Activated CD4-positive, alpha-beta T cell treated with anti-CD3 and anti-CD28 coated beads, Interleukin-2, amount 10 ng/mL, durations not matched to agents 24 days and 14 days (primary cell): ENCODE measurements at regions of chr22 and their contacts with region 1.

Region 1: DNA sequence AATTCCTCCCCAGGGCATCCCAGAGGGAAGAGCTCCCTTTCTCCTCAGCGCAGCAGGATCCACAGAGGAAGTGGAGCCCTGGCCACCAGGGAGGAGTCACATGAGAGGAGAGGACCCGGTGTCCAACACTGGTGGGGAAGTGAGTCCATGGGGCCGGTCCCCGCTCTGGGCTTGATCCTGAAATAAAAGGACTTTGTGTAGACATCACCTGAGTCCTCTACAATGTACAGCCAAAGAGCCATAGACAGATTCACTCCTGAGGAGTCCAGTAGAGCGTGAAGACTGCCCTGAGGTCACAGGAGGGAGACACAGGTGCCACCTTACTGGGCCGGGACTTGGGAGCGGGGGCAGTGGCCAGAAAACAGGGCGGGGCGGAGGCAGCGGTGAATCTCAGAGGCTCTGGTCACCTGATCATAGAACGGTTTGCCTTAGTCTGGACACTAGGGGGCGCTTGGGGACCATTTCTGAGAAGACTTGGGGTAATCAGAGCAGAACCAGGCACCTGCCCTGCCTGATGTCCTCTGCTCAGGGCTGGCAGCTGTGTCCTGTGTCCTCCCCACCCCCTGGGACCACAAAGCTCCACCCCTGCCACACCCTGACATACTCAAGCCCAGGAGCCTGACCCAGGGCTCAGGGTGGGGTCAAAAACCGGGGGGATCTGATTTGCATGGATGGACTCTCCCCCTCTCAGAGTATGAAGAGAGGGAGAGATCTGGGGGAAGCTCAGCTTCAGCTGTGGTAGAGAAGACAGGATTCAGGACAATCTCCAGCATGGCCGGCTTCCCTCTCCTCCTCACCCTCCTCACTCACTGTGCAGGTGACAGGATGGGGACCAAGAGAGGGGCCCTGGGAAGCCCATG is 112.7 kb downstream of the VPREB1 start:
- DNase-seq: peak; percentile 94
- H3K4me3 Mint-ChIP-seq: no peak overlapping the region
- H3K27ac Mint-ChIP-seq: no peak overlapping the region
- H3K4me1 Mint-ChIP-seq: peaks cover 7% of the 10 kb centered on the region
- H3K27me3 Mint-ChIP-seq: peaks cover 25% of the 10 kb centered on the region

Region 2: GRCh38 chr22:22375576-22376423 is 18.5 kb after region 1 on chr22:
- intact Hi-C with region 1: loop called (anchors 1 kb)
- DNase-seq: no peak
- H3K4me3 Mint-ChIP-seq: no peak overlapping the region
- H3K27ac Mint-ChIP-seq: no peak overlapping the region
- H3K4me1 Mint-ChIP-seq: no peaks in the 10 kb centered on the region
- H3K27me3 Mint-ChIP-seq: peaks cover 42% of the 10 kb centered on the region

Region 3: DNA sequence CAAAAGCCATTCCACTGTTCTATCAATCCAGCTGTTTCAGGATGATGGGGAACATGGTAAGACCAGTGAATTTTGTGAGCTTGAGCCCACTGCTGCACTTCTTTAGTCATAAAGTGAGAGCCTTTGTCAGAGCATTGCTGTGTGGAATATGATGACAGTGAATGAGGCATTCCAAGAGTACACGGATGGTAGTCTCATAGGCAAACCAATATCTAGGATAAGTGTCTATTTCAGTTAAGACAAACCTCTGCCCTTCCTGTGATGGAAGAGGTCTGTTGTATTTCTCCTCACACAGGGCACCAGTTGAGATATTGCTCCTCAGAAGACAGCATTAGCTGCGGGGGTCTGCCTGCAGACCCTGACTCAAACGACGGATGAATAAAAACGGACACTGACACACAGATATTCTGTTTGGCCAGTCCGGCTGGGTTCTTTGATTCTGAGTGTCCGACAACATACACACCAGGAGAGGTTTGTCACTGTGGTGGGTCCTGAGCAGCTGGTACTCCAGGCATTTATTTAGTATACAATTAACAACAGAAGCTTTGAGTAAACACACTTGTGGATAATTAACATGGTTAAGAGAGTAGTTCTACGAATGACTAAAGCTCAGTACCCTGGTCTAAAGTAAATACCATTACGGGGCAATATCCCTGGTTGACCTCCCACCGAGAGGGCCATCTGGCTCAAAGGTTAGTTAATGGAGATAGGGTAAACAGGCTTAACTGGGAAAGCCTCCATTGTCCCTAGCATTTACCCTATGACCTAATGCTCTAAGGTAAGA is 29.5 kb after region 1 on chr22:
- intact Hi-C with region 1: no loop called
- DNase-seq: no peak
- H3K4me3 Mint-ChIP-seq: no peak overlapping the region
- H3K27ac Mint-ChIP-seq: no peak overlapping the region
- H3K4me1 Mint-ChIP-seq: no peaks in the 10 kb centered on the region
- H3K27me3 Mint-ChIP-seq: peaks cover 36% of the 10 kb centered on the region

Region 4: GRCh38 chr22:22397277-22397870 is 40.1 kb after region 1 on chr22:
- intact Hi-C with region 1: no loop called
- DNase-seq: no peak
- H3K4me3 Mint-ChIP-seq: no peak overlapping the region
- H3K27ac Mint-ChIP-seq: no peak overlapping the region
- H3K4me1 Mint-ChIP-seq: no peaks in the 10 kb centered on the region
- H3K27me3 Mint-ChIP-seq: peaks cover 31% of the 10 kb centered on the region

Region 5: DNA sequence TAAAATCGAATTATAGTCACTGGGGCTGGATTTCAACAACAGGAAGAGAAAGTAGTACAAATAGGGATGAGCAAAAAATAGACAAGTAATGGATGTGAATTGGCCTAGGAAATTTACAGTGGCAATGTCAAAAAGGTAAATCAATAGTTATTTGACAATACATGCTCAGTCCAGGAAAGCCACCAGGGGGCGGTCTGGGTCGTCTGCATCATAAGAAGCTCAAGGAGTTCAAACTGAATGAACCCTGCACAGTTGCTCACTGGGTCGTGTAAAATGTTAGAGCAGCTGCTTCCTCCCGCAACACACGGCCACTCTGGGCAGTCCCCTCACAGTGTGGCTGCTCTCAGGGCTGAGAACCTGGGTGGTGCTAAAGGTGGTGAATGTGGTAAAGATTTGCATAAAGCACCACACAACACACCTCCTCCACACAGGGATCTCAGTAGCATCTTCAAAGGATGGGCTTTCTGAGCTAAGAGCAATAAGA is 65.4 kb after region 1 on chr22:
- intact Hi-C with region 1: loop called (anchors 2 kb)
- DNase-seq: peak; percentile 89
- H3K4me3 Mint-ChIP-seq: no peak overlapping the region
- H3K27ac Mint-ChIP-seq: no peak overlapping the region
- H3K4me1 Mint-ChIP-seq: no peaks in the 10 kb centered on the region
- H3K27me3 Mint-ChIP-seq: peaks cover 29% of the 10 kb centered on the region

Region 6: DNA sequence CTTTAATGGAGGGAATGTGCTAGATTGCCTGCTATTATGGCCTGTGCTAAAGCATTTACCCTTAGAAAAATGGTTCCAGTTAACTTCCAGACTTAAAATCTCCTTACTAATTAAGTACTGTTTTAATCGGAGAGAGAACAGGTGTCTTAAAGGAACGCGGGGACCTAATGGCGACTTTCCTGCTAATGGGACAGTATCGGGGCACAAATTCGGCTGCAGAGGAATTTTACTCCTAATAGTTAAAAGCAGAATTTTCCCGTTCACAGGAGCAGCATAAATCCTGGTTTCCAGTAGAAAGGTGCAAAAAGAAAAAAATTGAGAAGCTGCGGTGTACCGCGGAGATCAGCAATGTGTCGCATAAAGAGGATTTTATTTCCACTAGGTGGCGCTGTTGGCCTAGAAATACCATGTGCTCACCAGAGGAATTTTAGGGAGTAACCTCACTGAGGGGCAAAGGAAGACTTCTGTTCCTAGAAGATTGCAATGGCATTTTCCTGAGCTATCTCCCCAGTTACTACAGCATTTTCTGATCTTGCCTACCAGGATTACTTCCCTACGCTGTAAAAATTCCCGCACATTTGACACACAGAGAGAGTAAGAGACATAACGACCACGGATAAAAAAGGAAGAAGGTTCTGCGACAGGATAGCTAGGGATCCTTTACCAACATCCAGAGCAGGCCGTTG is 106.7 kb after region 1 on chr22:
- intact Hi-C with region 1: no loop called
- DNase-seq: peak; percentile 88
- H3K4me3 Mint-ChIP-seq: no peak overlapping the region
- H3K27ac Mint-ChIP-seq: no peak overlapping the region
- H3K4me1 Mint-ChIP-seq: no peaks in the 10 kb centered on the region
- H3K27me3 Mint-ChIP-seq: peaks cover 23% of the 10 kb centered on the region